ENCODE measurements at regions of chr11 and their contacts with region 1.

Region 1: DNA sequence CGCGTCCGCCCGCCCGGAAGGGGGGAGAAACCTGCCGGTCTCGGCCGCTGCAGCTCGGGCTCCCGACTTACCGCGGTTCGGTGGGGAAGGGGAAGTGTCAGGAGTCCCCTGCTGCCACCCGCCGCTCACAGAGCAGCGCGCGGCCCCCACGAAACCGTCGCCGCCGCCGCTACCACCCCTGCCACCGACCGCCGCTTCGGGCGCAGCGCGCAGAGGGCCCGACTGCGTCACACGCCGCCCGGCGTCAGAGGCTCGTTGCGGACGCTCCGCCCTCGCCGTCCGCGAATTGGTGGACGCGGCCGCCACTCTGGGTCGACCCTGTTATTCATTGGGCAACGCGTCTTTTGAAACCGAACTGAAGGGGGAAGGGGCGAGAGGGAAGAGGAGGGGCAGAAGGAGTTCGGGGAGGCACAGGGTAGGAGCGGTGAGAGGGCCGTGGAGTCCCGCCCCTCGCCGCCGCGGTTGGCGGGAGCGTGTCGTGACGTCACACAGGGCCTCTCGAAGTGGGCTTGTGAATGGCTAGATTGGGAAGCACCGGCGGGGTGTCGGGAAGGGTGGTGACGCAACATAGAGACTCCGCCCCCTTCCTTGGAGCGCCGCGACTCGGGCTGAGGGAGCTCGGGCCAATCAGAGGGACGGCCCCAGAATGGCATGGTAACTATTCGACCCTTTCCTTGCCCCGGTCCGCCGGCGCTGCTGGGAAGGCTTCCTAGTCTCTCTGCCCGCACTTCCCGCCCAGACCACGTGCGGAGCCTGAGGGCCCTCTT is at the start of gene NUP98:
- DNase-seq: peak; percentile 100
- H3K4me3 ChIP-seq: peak within 1 kb of the TSS; percentile 87 to 98 (median 94)
- H3K27ac ChIP-seq: peak within 1 kb of the TSS; percentile 92 to 98 (median 97)
- H3K4me1 ChIP-seq: peaks cover 9 to 33% (median 22%) of the 10 kb centered on the region in 4 donors
- H3K27me3 ChIP-seq: no peaks in the 10 kb centered on the region
- CTCF ChIP-seq: peak in 1 of 5 experiments; percentile 46
- EP300 ChIP-seq: peak; percentile 47
- POLR2A ChIP-seq: peak; percentile 98
- total RNA-seq, gene NUP98: 37.0 to 103 (median 72.4) TPM

Region 2: DNA sequence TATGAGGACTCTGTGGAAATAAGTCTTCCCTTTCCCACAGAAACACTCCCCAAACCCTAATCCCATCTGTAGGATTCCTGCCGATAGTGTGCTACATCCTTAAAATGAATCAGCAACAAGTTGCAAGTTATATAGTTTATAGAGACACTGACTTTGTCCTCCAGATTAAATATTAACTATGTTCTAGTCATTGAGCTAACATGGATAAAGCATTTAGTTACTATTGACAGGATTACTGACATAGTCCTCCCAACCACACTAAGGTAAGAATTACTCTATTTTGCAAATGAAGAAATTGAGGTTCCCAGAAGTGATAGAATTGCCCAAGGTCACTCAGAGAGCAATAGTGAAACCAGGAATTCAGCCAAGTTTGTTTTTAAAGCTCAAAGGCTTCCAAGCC is 749.4 kb after region 1 on chr11:
- in situ Hi-C with region 1: no loop called
- intact Hi-C with region 1: loop called (anchors 5 kb)
- DNase-seq: no peak
- H3K4me3 ChIP-seq: no peak overlapping the region
- H3K27ac ChIP-seq: peak overlapping the region in 2 of 4 donors; percentile 30 to 57
- H3K4me1 ChIP-seq: peaks cover 0 to 12% (median 0%) of the 10 kb centered on the region in 4 donors
- H3K27me3 ChIP-seq: no peaks in the 10 kb centered on the region
- CTCF ChIP-seq: no peak
- EP300 ChIP-seq: no peak
- POLR2A ChIP-seq: no peak